Activated T-helper 1 cell treated with anti-CD3 and anti-CD28 coated beads, Interleukin-12 subunit alpha, Interleukin-12 subunit beta, Interleukin-2, Interleukin-4 antibody, amounts not matched to agents 30 ng/mL and 10 ng/mL and 1 ng/mL, durations not matched to agents 14 hours and 24 hours and 36 hours (primary cell): ENCODE measurements at regions of chr10 and their contacts with region 1.

Region 1: GRCh38 chr10:27446091-27446918 is 57.8 kb upstream of the RAB18 start:
- DNase-seq: no peak
- H3K4me3 Mint-ChIP-seq: no peak overlapping the region
- H3K27ac Mint-ChIP-seq: no peak overlapping the region
- H3K4me1 Mint-ChIP-seq: no peaks in the 10 kb centered on the region
- H3K27me3 Mint-ChIP-seq: peaks cover 2% of the 10 kb centered on the region

Region 2: GRCh38 chr10:26839966-26840627 is 606.2 kb before region 1 on chr10:
- intact Hi-C with region 1: no loop called
- DNase-seq: no peak
- H3K4me3 Mint-ChIP-seq: no peak overlapping the region
- H3K27ac Mint-ChIP-seq: peak overlapping the region; percentile 63
- H3K4me1 Mint-ChIP-seq: peaks cover 55% of the 10 kb centered on the region
- H3K27me3 Mint-ChIP-seq: no peaks in the 10 kb centered on the region

Region 3: DNA sequence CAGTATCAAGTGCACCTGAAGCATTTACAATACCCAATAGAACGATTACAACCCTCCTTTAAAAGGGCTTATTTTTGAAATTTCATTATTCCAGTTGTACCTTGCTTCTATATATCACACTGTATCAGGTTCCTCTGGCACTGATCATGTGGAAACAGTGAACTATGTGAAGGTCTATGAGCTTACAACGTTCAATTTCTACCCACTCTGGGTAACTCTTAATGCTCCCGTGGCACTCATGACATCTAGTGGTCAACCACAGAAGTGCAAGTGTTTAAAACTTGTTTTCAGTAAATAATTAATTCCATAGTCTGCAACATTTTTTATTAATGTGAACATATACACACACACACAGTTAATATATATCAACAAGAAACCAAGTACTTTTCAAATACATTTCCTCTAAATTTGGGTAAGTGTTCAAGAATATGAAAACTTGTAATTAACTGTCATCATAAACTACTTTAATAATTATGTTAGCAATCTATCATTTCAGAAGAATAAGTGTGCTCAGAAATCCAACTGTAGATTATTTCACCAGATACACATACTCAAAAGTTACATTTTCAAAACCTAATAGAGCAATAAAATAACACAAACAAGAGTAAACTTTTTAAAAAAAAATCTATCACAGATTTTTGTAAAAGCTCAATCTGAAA is 795.6 kb after region 1 on chr10:
- intact Hi-C with region 1: loop called (anchors 5 kb)
- DNase-seq: peak; percentile 4
- H3K4me3 Mint-ChIP-seq: no peak overlapping the region
- H3K27ac Mint-ChIP-seq: no peak overlapping the region
- H3K4me1 Mint-ChIP-seq: no peaks in the 10 kb centered on the region
- H3K27me3 Mint-ChIP-seq: no peaks in the 10 kb centered on the region